ENCODE measurements at regions of chr2 and their contacts with region 1.

Region 1: GRCh38 chr2:75787532-75788132 is 76.9 kb upstream of the GCFC2 start:
- DNase-seq: peak in 1 of 2 experiments; percentile 43
- H3K4me3 ChIP-seq: no peak overlapping the region
- H3K4me3 Mint-ChIP-seq: no peak overlapping the region
- H3K27ac Mint-ChIP-seq: peak overlapping the region; percentile 75
- H3K4me1 ChIP-seq: peaks cover 17% of the 10 kb centered on the region
- H3K4me1 Mint-ChIP-seq: peaks cover 7% of the 10 kb centered on the region
- H3K27me3 ChIP-seq: no peaks in the 10 kb centered on the region
- H3K27me3 Mint-ChIP-seq: no peaks in the 10 kb centered on the region
- CTCF ChIP-seq: peak; percentile 51 to 54

Region 2: DNA sequence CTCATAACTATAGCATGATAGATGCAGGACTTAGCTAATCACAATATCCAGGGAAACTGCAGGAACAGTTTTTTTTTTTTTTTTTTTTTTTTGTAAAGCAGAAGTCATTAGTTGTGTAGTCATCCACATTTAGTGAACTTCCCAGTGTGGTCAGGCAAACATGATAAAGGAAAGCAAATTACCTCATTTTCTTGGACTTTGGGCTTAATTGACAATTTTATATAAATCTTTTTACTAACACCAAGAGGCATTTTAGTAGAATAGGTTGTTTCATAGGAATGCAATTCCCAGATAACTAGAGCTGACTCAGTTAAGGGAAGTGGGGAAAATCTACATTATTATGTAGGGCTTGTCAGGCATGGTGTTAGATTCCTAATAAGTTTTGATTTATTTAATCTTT is 65.8 kb after region 1 on chr2:
- CTCF ChIA-PET with region 1: no interaction called
- POLR2A ChIA-PET with region 1: no interaction called
- intact Hi-C with region 1: loop called (anchors 5 kb)
- DNase-seq: no peak
- H3K4me3 ChIP-seq: no peak overlapping the region
- H3K4me3 Mint-ChIP-seq: no peak overlapping the region
- H3K27ac Mint-ChIP-seq: no peak overlapping the region
- H3K4me1 ChIP-seq: no peaks in the 10 kb centered on the region
- H3K4me1 Mint-ChIP-seq: no peaks in the 10 kb centered on the region
- H3K27me3 ChIP-seq: no peaks in the 10 kb centered on the region
- H3K27me3 Mint-ChIP-seq: no peaks in the 10 kb centered on the region
- CTCF ChIP-seq: no peak

Region 3: GRCh38 chr2:75994759-75995158 is 207.1 kb after region 1 on chr2:
- CTCF ChIA-PET with region 1: no interaction called
- POLR2A ChIA-PET with region 1: no interaction called
- intact Hi-C with region 1: loop called (anchors 1 kb)
- DNase-seq: peak in 1 of 2 experiments; percentile 32
- H3K4me3 ChIP-seq: no peak overlapping the region
- H3K4me3 Mint-ChIP-seq: no peak overlapping the region
- H3K27ac Mint-ChIP-seq: no peak overlapping the region
- H3K4me1 ChIP-seq: no peaks in the 10 kb centered on the region
- H3K4me1 Mint-ChIP-seq: no peaks in the 10 kb centered on the region
- H3K27me3 ChIP-seq: no peaks in the 10 kb centered on the region
- H3K27me3 Mint-ChIP-seq: no peaks in the 10 kb centered on the region
- CTCF ChIP-seq: peak in 1 of 2 experiments; percentile 25

Region 4: GRCh38 chr2:76197842-76198448 is 410.3 kb after region 1 on chr2:
- CTCF ChIA-PET with region 1: no interaction called
- POLR2A ChIA-PET with region 1: no interaction called
- intact Hi-C with region 1: loop called (anchors 5 kb)
- DNase-seq: peak; percentile 64 to 74
- H3K4me3 ChIP-seq: no peak overlapping the region
- H3K4me3 Mint-ChIP-seq: no peak overlapping the region
- H3K27ac Mint-ChIP-seq: no peak overlapping the region
- H3K4me1 ChIP-seq: 0 out of 2 replicates have a peak, but pooled peaks cover under 1% of the 10 kb centered on the region
- H3K4me1 Mint-ChIP-seq: no peaks in the 10 kb centered on the region
- H3K27me3 ChIP-seq: no peaks in the 10 kb centered on the region
- H3K27me3 Mint-ChIP-seq: no peaks in the 10 kb centered on the region
- CTCF ChIP-seq: peak; percentile 64

Region 5: DNA sequence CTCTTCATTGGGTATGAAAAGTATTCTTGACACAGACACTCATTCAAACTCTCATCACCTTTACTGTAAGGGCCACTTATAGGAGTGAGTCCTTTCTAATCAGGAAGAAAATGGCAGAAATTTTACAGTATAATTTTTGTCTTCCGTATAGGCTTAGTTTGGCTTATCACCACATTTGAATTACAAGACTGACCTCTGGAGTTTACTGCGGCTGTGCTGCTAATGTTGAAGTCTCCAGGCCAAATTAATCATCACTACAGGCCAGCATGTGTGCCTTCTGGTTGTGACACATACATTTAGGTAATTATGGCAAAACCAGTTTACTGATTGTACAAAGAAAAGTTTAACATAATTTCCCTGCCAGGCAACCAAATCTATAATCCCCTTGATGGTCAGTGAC is 676.7 kb after region 1 on chr2:
- CTCF ChIA-PET with region 1: no interaction called
- POLR2A ChIA-PET with region 1: no interaction called
- intact Hi-C with region 1: loop called (anchors 10 kb)
- DNase-seq: no peak
- H3K4me3 ChIP-seq: no peak overlapping the region
- H3K4me3 Mint-ChIP-seq: no peak overlapping the region
- H3K27ac Mint-ChIP-seq: no peak overlapping the region
- H3K4me1 ChIP-seq: no peaks in the 10 kb centered on the region
- H3K4me1 Mint-ChIP-seq: no peaks in the 10 kb centered on the region
- H3K27me3 ChIP-seq: no peaks in the 10 kb centered on the region
- H3K27me3 Mint-ChIP-seq: no peaks in the 10 kb centered on the region
- CTCF ChIP-seq: no peak